ENCODE measurements at regions of chr11 and their contacts with region 1.

Region 1: GRCh38 chr11:59668950-59669610 is at the start of gene PATL1:
- DNase-seq: peak; percentile 99 to 100
- ATAC-seq: peak; percentile 94 to 97 (median 95)
- H3K4me3 ChIP-seq: peak within 1 kb of the TSS; percentile 86
- H3K27ac ChIP-seq: peak within 1 kb of the TSS; percentile 91
- H3K4me1 ChIP-seq: peaks cover 16% of the 10 kb centered on the region
- H3K27me3 ChIP-seq: no peaks in the 10 kb centered on the region
- CTCF ChIP-seq: no peak
- total RNA-seq, gene PATL1: 29.6 to 47.8 (median 41.0) TPM

Region 2: DNA sequence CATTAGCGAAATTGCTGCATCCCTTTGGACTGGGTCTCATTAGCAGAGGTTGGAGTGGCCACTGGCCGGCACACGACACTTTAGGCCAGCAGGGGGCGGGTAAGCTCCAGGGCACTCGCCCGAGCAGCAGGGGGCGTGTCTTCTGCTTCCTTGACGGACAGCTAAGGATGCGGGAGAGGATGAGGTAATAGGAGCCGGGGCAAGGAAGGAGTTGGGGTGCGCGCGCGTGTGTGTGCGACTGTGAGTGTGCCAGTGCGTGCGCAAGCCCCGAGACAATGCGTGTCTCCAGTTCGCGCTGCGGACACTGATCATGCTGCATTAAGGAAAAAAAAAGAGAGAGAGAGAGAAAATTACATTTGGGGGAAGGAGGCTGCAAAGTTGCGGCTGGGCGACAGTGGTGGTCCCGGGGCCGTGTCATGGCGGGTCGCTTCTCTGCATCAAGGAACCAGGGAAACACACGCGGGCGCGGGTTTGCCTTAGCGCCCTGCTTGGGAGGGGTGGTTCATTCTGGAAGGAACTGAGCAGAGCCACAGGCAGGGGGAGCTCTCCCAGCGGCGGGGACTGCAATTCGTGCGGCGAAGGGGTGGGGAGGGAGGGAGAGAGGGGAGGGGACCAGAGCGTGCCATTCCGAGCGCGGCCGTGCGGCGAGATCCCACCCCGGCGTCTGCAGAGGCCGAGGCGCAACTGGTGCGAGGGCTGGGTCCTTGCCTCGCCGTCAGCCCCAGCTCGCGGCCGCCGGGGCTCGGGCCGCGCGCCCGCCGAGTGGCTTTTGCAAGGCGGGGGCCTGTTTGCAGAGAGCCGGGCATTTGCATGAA is 497.4 kb before region 1 on chr11 and contains the start of gene DTX4:
- intact Hi-C with region 1: loop called in 1 of 2 experiments (anchors 10 kb)
- DNase-seq: peak; percentile 90 to 95
- ATAC-seq: peak; percentile 94 to 99 (median 98)
- H3K4me3 ChIP-seq: peak within 1 kb of the TSS; percentile 72
- H3K27ac ChIP-seq: no peak within 1 kb of the TSS
- H3K4me1 ChIP-seq: no peaks in the 10 kb centered on the region
- H3K27me3 ChIP-seq: peaks cover 0 to 27% (median 4%) of the 10 kb centered on the region in 3 donors
- CTCF ChIP-seq: peak; percentile 87
- total RNA-seq, gene DTX4: 1.2 to 2.7 (median 2.3) TPM

Region 3: DNA sequence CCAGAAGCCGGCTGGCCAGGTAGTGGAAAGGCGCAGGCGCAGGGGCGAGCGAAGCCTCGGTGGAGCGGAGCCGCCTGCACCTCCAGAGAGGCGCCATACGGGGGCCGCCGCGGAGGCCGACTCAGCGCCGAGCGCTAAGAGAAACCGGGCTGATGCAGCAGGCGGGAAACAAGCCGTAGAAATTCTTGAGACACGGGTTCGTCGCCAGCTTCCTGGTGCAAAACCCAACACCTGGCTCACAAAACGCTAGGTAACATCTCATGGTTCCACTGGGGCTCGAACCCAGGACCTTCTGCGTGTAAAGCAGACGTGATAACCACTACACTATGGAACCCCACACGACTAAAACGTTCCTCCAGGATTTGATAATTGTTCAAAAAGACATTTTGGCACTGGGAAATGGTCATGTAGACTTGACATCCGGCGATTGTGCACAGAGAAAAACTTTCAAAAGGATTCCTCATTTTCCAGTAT is 118.7 kb before region 1 on chr11:
- intact Hi-C with region 1: loop called in 1 of 2 experiments (anchors 5 kb)
- DNase-seq: peak; percentile 80 to 84
- ATAC-seq: peak; percentile 87 to 89 (median 88)
- H3K4me3 ChIP-seq: peak overlapping the region; percentile 66
- H3K27ac ChIP-seq: peak overlapping the region; percentile 87
- H3K4me1 ChIP-seq: no peaks in the 10 kb centered on the region
- H3K27me3 ChIP-seq: no peaks in the 10 kb centered on the region
- CTCF ChIP-seq: peak; percentile 51

Region 4: DNA sequence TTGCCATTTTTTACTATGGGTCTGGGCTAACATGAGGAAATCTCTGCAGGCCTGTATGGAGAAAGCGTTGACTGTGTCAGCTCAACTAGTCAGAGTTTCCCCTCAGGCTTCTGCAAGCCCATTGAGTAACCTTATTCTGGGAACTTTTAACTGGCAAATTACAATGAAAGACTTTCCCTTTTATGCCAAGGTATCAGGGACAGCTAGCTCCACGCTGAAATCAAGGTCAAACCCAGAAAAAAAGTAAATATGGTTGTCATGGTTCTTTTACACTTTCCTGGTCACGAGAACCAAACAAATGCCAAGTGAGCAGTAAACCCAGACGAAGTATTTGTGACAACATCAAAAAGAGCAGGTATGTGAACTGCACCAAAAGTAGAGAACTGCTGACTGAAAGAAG is 67.3 kb before region 1 on chr11:
- intact Hi-C with region 1: loop called in 1 of 2 experiments (anchors 5 kb)
- DNase-seq: no peak
- ATAC-seq: no peak
- H3K4me3 ChIP-seq: no peak overlapping the region
- H3K27ac ChIP-seq: no peak overlapping the region
- H3K4me1 ChIP-seq: peaks cover 29% of the 10 kb centered on the region
- H3K27me3 ChIP-seq: no peaks in the 10 kb centered on the region
- CTCF ChIP-seq: no peak

Region 5: GRCh38 chr11:59615637-59616395 is 53.3 kb before region 1 on chr11 and contains the start of gene OSBP:
- intact Hi-C with region 1: loop called in 1 of 2 experiments (anchors 5 kb)
- DNase-seq: peak; percentile 99 to 100
- ATAC-seq: peak; percentile 86 to 91 (median 86)
- H3K4me3 ChIP-seq: peak within 1 kb of the TSS; percentile 92
- H3K27ac ChIP-seq: peak within 1 kb of the TSS; percentile 98
- H3K4me1 ChIP-seq: peaks cover 34% of the 10 kb centered on the region
- H3K27me3 ChIP-seq: no peaks in the 10 kb centered on the region
- CTCF ChIP-seq: no peak
- total RNA-seq, gene OSBP: 43.3 to 51.2 (median 48.6) TPM

Region 6: GRCh38 chr11:59802639-59803176 is 133.6 kb after region 1 on chr11:
- intact Hi-C with region 1: loop called (anchors 5 to 10 kb)
- DNase-seq: no peak
- ATAC-seq: peak; percentile 79 to 94 (median 84)
- H3K4me3 ChIP-seq: peak overlapping the region; percentile 10
- H3K27ac ChIP-seq: peak overlapping the region; percentile 71
- H3K4me1 ChIP-seq: peaks cover 8% of the 10 kb centered on the region
- H3K27me3 ChIP-seq: no peaks in the 10 kb centered on the region
- CTCF ChIP-seq: peak; percentile 79

Region 7: DNA sequence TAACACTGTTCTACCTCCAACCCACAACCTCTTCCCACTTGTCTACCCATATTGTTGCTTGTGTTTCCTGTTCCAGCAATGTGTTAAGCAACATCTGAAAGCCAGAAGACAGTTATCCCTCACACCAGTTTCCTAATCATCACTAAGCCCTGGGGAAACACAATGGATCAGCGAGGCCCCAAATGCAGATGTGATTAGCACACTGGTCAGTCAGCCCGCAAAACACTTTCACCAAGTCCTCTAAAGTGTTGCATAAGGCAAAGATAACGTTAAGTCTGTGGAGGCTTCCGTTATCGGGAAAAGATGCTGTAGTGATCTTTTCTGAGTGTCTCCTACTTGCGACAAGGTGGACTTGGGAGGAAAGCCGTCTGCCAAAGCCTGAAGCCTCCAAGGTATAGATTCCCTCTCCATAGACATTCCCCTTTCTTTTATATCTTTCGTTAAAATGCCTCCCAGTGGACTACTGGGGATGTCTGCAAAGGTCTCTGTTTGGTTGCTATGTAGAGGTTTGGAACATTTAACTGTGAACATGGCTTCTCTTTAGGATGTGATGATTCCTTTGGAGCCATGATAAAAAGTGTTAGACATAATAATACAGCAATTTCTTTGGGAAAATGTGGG is 387.4 kb after region 1 on chr11 and contains the start of gene MS4A3:
- intact Hi-C with region 1: no loop called
- DNase-seq: no peak
- ATAC-seq: no peak
- H3K4me3 ChIP-seq: no peak within 1 kb of the TSS
- H3K27ac ChIP-seq: no peak within 1 kb of the TSS
- H3K4me1 ChIP-seq: no peaks in the 10 kb centered on the region
- H3K27me3 ChIP-seq: no peaks in the 10 kb centered on the region
- CTCF ChIP-seq: no peak
- total RNA-seq, gene MS4A3: not detected

Measured in psoas muscle (tissue), 8 donors.